Calu3 (cell line): ENCODE measurements at regions of chr18 and their contacts with region 1.

Region 1: DNA sequence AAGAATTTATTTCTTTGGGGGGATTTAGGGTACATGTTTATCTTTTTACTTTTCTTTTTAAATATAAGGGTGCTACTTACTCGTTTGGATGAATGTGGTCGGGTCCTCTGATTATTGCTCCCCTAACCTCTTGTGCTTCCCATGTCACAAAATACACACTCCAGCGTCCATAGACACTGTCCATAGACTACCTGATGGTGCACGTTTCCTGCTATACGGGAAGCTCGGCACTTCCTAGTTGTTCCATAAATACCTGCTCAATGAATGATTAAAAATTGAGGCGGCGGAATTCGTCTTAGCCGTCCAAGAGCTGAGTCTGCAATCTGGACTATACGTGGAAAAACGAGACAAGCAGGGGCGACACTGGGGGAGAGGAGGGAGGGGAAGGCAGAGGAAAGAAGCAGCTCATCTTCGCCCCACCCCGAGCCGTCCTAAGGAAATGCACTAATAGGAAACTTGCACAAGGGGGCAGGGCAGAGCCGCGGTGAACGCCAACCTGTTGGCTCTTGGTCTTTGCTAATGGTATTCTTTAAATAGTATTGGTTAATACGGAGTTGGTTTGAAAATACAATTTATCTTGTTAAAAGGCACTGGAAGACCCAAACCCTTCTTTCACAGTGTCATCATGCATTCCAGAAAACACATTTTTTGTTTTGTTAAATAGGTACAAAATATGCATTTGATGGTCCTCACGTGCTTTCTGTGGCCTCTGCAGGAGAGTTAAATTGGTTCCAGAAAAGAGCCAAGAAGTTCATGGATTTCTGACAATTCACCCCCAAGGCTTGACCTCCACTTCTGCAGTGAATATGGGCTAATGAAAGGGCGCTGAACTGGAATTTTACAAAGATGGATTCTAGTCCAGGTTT is 73.0 kb upstream of the KCTD1 start:
- DNase-seq: peak; percentile 77
- H3K4me3 Mint-ChIP-seq: peak overlapping the region; percentile 55
- H3K27ac Mint-ChIP-seq: no peak overlapping the region
- H3K4me1 Mint-ChIP-seq: peaks cover 14% of the 10 kb centered on the region
- H3K27me3 Mint-ChIP-seq: no peaks in the 10 kb centered on the region
- CTCF ChIP-seq: peak; percentile 81

Region 2: GRCh38 chr18:26593365-26594320 is 27.8 kb before region 1 on chr18:
- CTCF ChIA-PET with region 1: no interaction called
- intact Hi-C with region 1: no loop called
- DNase-seq: no peak
- H3K4me3 Mint-ChIP-seq: no peak overlapping the region
- H3K27ac Mint-ChIP-seq: no peak overlapping the region
- H3K4me1 Mint-ChIP-seq: no peaks in the 10 kb centered on the region
- H3K27me3 Mint-ChIP-seq: peaks cover 28% of the 10 kb centered on the region
- CTCF ChIP-seq: no peak

Region 3: GRCh38 chr18:26771524-26771923 is 150.1 kb after region 1 on chr18:
- CTCF ChIA-PET with region 1: interaction called, 10 read pairs
- intact Hi-C with region 1: loop called (anchors 1 kb)
- DNase-seq: peak; percentile 35
- H3K4me3 Mint-ChIP-seq: no peak overlapping the region
- H3K27ac Mint-ChIP-seq: no peak overlapping the region
- H3K4me1 Mint-ChIP-seq: no peaks in the 10 kb centered on the region
- H3K27me3 Mint-ChIP-seq: no peaks in the 10 kb centered on the region
- CTCF ChIP-seq: peak; percentile 60

Region 4: GRCh38 chr18:26827581-26827980 is 206.2 kb after region 1 on chr18:
- CTCF ChIA-PET with region 1: no interaction called
- intact Hi-C with region 1: no loop called
- DNase-seq: no peak
- H3K4me3 Mint-ChIP-seq: no peak overlapping the region
- H3K27ac Mint-ChIP-seq: no peak overlapping the region
- H3K4me1 Mint-ChIP-seq: no peaks in the 10 kb centered on the region
- H3K27me3 Mint-ChIP-seq: peaks cover 23% of the 10 kb centered on the region
- CTCF ChIP-seq: no peak

Region 5: DNA sequence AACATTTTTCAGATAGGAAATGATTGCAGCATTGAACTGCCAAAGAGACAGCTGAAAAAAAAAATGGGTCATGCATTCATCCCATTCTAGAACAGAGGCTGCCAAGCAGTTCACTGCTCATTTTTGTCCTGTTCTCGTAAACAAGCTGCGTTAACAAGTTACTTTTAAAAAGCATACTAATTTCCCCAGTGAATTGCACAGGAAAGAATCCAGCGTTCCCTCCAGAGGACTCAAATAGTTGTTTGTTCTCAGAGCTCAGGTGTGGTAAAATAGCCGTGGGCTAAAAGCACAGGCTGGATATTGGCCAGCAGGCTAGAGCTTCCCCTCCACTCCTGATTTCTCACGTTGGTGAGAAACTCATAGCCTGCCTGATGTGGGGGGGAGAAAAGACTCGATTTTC is 320.2 kb after region 1 on chr18:
- CTCF ChIA-PET with region 1: no interaction called
- intact Hi-C with region 1: loop called (anchors 10 kb)
- DNase-seq: no peak
- H3K4me3 Mint-ChIP-seq: no peak overlapping the region
- H3K27ac Mint-ChIP-seq: no peak overlapping the region
- H3K4me1 Mint-ChIP-seq: no peaks in the 10 kb centered on the region
- H3K27me3 Mint-ChIP-seq: no peaks in the 10 kb centered on the region
- CTCF ChIP-seq: no peak